Left ventricle myocardium superior (tissue), 1 donor: ENCODE measurements at regions of chr5 and their contacts with region 1.

Region 1: DNA sequence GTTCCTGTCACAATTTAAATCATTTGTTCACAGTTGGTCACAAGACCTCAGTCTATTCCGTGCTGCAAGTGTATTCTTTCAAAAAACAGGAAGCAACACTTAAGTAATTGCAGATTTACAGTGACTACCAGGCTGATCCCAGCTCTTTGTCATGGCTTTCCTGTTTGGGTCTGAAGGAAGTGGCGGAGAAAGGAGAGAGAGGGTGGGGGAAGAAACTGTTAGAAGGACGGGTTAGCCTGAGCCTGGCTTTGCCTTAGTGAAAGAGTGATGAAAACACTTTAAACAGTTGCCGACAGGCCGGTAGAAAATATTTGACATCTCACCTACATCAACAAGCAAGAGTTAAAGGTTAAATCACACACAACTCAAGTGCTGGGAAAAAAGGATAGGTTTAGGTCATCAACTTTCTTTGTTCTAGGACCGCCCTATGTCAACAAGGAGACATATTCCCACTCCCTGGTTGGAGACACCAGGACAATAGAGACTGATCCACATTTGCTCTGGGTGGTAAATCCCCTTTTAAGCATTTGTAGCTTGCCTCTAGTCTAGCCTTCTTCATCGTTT is 102.2 kb upstream of the DAB2 start:
- DNase-seq: no peak
- ATAC-seq: peak; percentile 90

Region 2: DNA sequence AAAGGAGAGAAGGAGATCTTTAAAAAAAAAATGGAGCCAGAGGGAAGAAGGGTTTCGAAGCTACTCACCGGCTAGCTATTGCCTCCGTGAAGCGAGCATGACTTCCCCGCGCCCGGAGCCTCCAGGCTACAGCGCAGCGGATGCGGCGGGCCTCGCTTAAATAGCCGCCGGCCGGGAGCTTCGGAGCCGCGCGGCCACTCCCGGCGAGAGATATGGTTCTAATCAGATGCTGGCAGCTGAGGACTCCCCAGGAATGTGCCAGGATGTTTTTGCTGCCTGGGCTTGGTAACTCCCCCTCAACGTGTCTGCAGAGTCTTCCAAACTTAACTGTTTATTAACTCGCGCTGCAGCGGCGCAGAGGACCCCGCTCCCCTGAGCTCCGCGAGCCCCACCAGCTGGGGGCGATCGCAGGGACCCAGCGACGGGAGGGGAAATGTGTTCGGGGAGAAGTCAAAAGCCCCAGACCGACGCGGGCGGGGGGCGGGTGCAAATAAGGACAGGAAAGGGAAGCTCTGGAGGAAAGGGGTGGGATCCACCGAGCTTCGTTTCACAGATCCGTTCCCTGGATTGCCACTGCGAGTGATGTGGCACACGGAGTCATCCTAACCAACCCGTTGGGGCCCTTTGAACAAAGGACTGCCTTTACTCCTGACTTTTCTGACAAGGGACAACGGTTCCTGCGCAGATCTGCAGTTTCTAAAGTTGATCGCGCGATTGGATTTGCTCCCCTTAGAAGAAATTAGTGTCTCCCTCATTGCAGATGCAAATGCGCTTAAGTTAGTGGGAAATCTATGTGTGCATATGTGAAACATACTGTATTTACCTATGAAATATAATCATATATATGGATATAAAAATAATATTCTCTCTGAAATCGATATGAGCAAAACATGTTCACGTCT is 102.0 kb before region 1 on chr5 and contains the start of gene DAB2:
- intact Hi-C with region 1: loop called (anchors 5 kb)
- DNase-seq: peak; percentile 89
- ATAC-seq: peak; percentile 80
- total RNA-seq, gene DAB2: 32.4 TPM

Region 3: GRCh38 chr5:39452846-39453245 is 74.2 kb before region 1 on chr5:
- intact Hi-C with region 1: no loop called
- DNase-seq: no peak
- ATAC-seq: no peak